B cell (primary cell): ENCODE measurements at regions of chr17 and their contacts with region 1.

Region 1: DNA sequence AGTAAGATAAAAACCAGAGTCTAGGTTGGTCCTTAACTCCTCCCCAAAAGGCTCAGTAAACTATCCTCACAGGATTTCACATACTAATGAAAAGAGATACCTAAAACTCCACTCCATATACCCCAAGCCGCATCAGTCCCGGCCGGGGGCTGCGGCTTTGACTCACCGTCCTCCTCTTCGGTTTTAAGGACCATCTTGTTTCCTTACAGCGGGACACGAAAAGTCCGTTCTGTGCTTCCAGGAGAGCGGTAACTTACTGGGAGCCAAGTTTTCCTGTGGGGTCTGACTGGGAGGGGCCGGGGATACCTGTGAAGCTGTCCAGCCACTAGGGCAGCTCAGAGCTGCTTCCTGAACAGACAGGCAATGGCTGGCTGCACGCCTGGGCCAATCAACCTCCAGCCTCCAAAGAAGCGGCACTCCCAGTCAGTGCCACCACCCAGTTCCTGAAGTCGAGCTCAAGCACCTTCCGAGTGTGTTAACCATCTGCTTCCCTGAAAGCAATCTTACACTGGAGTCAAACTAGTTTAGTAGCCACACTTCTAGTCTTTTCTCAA is 45.5 kb downstream of the CYTH1 start:
- DNase-seq: peak; percentile 76
- ATAC-seq: peak; percentile 56
- H3K4me3 ChIP-seq: peak overlapping the region; percentile 79 to 100 (median 85)
- H3K4me3 Mint-ChIP-seq: peak overlapping the region; percentile 91
- H3K27ac ChIP-seq: peak overlapping the region; percentile 80 to 95
- H3K27ac Mint-ChIP-seq: peak overlapping the region; percentile 89
- H3K4me1 ChIP-seq: peaks cover 78 to 84% of the 10 kb centered on the region in 2 donors
- H3K4me1 Mint-ChIP-seq: peaks cover 85% of the 10 kb centered on the region
- H3K27me3 ChIP-seq: no peaks in the 10 kb centered on the region
- H3K27me3 Mint-ChIP-seq: no peaks in the 10 kb centered on the region
- CTCF ChIP-seq: no peak

Region 2: DNA sequence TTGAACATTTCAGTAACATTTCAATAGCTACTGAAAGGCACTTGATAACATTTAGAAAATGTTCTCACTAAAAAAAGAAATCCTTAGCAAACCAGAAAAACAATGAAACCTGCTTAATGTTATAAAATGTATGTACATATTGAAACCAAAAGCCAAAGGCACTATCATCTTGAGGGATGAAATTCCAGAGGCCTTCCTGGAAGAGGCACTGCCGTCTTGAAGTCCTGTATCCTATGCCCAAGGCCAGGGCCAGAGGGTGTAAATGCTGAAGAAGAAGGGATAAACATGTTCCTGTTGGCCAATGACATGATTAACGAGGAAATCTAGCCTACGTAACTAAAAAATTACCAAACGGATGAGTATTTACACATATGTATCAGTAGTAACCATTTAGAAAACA is 102.4 kb before region 1 on chr17:
- CTCF ChIA-PET with region 1: no interaction called
- POLR2A ChIA-PET with region 1: interaction called, 10 read pairs
- intact Hi-C with region 1: no loop called
- DNase-seq: no peak
- ATAC-seq: no peak
- H3K4me3 ChIP-seq: no peak overlapping the region
- H3K4me3 Mint-ChIP-seq: no peak overlapping the region
- H3K27ac ChIP-seq: no peak overlapping the region
- H3K27ac Mint-ChIP-seq: no peak overlapping the region
- H3K4me1 ChIP-seq: peaks cover 0 to 17% of the 10 kb centered on the region in 2 donors
- H3K4me1 Mint-ChIP-seq: peaks cover 19% of the 10 kb centered on the region
- H3K27me3 ChIP-seq: no peaks in the 10 kb centered on the region
- H3K27me3 Mint-ChIP-seq: peaks cover 3% of the 10 kb centered on the region
- CTCF ChIP-seq: no peak

Region 3: DNA sequence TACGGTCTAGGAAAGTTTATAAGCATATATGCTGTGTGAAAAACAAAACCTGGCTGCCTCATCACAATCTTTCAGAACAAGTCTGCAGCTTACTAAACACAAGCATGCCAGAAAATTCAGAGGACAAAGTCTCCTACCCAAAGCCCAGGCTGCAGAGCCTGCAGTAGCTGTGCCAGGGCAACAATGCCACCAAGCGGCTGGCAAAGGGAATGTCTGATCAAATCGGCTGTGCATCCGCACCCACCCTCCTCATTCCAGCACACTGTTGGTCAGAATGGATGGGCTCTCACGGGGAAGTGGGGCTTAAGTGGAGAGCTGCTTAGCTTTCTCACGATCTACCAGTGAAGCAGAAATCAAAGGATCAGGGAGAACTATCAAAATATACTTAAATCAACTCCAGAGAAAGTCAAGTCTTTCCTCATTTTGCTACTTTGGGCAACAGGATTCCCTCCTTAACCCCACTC is 28.1 kb before region 1 on chr17:
- CTCF ChIA-PET with region 1: interaction called, 65 read pairs
- POLR2A ChIA-PET with region 1: interaction called, 8 read pairs
- intact Hi-C with region 1: loop called (anchors 1 kb)
- DNase-seq: peak; percentile 65
- ATAC-seq: peak; percentile 46
- H3K4me3 ChIP-seq: no peak overlapping the region
- H3K4me3 Mint-ChIP-seq: peak overlapping the region; percentile 75
- H3K27ac ChIP-seq: peak overlapping the region; percentile 62 to 74
- H3K27ac Mint-ChIP-seq: peak overlapping the region; percentile 87
- H3K4me1 ChIP-seq: peaks cover 55 to 69% of the 10 kb centered on the region in 2 donors
- H3K4me1 Mint-ChIP-seq: peaks cover 68% of the 10 kb centered on the region
- H3K27me3 ChIP-seq: no peaks in the 10 kb centered on the region
- H3K27me3 Mint-ChIP-seq: no peaks in the 10 kb centered on the region
- CTCF ChIP-seq: peak; percentile 77

Region 4: GRCh38 chr17:78723001-78723796 is 13.4 kb before region 1 on chr17:
- CTCF ChIA-PET with region 1: interaction called, 50 read pairs
- POLR2A ChIA-PET with region 1: interaction called, 12 read pairs
- intact Hi-C with region 1: loop called (anchors 1 kb)
- DNase-seq: no peak
- ATAC-seq: no peak
- H3K4me3 ChIP-seq: peak overlapping the region in 2 of 5 experiments; percentile 14
- H3K4me3 Mint-ChIP-seq: peak overlapping the region; percentile 67
- H3K27ac ChIP-seq: peak overlapping the region; percentile 73
- H3K27ac Mint-ChIP-seq: peak overlapping the region; percentile 82
- H3K4me1 ChIP-seq: peaks cover 95 to 100% of the 10 kb centered on the region in 2 donors
- H3K4me1 Mint-ChIP-seq: peaks cover 92% of the 10 kb centered on the region
- H3K27me3 ChIP-seq: no peaks in the 10 kb centered on the region
- H3K27me3 Mint-ChIP-seq: no peaks in the 10 kb centered on the region
- CTCF ChIP-seq: no peak

Region 5: GRCh38 chr17:78774956-78775571 is 38.5 kb after region 1 on chr17:
- CTCF ChIA-PET with region 1: interaction called, 13 read pairs
- POLR2A ChIA-PET with region 1: interaction called, 10 read pairs
- intact Hi-C with region 1: loop called (anchors 2 kb)
- DNase-seq: peak; percentile 73
- ATAC-seq: peak; percentile 52
- H3K4me3 ChIP-seq: peak overlapping the region; percentile 33 to 76 (median 51)
- H3K4me3 Mint-ChIP-seq: peak overlapping the region; percentile 92
- H3K27ac ChIP-seq: peak overlapping the region; percentile 82 to 90
- H3K27ac Mint-ChIP-seq: peak overlapping the region; percentile 99
- H3K4me1 ChIP-seq: peaks cover 79 to 90% of the 10 kb centered on the region in 2 donors
- H3K4me1 Mint-ChIP-seq: peaks cover 68% of the 10 kb centered on the region
- H3K27me3 ChIP-seq: no peaks in the 10 kb centered on the region
- H3K27me3 Mint-ChIP-seq: no peaks in the 10 kb centered on the region
- CTCF ChIP-seq: no peak

Region 6: DNA sequence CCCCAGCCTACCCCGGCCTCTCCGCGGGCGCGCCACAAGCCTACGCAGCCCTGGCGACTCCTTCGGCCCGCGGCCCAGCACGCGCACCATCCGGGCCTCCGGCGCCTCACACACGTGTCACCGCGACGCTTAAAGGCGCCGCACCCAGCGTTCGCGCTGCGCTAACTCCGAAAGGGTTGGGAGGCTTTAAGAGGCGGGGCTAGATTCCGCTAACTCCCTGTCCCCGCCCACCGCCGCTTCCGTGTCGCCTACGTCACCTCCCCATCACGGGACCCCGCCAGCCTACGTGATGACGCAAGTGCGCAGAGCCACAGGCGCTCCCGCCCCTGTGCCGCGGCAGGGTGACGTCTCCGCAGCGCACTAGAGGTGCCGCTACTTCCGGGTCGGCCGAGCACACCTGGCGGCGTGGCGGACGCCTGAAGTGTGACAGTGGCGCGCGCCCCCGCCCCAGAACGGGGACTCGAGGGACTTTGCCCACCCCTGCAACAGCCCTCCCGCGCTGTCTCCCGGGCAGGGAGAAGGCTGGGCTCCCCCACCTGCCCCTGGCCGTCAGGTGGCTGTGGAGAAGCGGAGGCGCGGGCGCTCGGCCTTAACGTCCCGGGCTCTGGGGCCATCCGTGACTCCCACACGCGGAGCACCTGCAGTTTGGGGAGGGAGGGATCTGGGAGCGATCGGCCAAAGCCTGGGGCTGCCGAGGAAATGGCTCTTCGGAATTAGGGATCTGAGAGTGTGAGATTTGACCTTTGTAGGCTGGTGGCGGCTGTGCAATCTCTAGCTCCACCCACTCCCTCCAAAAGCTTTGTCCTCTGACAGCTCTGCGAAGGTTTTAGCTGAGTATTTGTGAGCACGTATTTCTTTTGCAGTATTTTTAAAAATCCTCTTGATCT is 104.4 kb after region 1 on chr17 and contains the start of gene USP36:
- CTCF ChIA-PET with region 1: interaction called, 4 read pairs
- POLR2A ChIA-PET with region 1: no interaction called
- intact Hi-C with region 1: loop called (anchors 10 kb)
- DNase-seq: peak; percentile 100
- ATAC-seq: peak; percentile 85
- H3K4me3 ChIP-seq: peak within 1 kb of the TSS; percentile 74 to 85 (median 83)
- H3K4me3 Mint-ChIP-seq: peak within 1 kb of the TSS; percentile 91
- H3K27ac ChIP-seq: peak within 1 kb of the TSS; percentile 99 to 100
- H3K27ac Mint-ChIP-seq: peak within 1 kb of the TSS; percentile 98
- H3K4me1 ChIP-seq: peaks cover 21 to 24% of the 10 kb centered on the region in 2 donors
- H3K4me1 Mint-ChIP-seq: peaks cover 37% of the 10 kb centered on the region
- H3K27me3 ChIP-seq: no peaks in the 10 kb centered on the region
- H3K27me3 Mint-ChIP-seq: no peaks in the 10 kb centered on the region
- CTCF ChIP-seq: no peak
- total RNA-seq, gene USP36: 137 and 145 TPM in 2 replicates